Pancreas (tissue), 10 donors: ENCODE measurements at regions of chr3 and their contacts with region 1.

Region 1: DNA sequence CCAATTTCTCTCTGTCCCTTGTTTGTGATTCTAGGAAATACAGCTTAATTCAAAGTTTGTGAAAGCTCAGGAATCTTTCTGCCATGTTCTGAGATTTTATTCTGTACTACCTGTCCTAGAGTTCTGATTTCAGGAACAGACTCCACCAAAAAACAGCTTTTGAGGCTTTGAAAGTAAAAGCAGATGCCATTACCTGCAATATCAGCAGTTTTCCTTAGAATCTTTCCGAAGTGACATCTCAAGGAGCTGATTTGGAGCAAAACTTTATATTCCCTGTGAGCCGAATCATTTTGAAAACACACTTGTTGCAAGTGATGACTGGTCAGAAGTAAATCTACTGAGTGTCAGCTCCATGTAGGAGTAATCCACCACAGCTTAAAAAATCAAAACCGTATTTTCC is 59.3 kb upstream of the CCNL1 start:
- DNase-seq: no peak
- ATAC-seq: no peak
- H3K4me3 ChIP-seq: no peak overlapping the region
- H3K27ac ChIP-seq: no peak overlapping the region
- H3K4me1 ChIP-seq: no peaks in the 10 kb centered on the region
- H3K27me3 ChIP-seq: no peaks in the 10 kb centered on the region
- CTCF ChIP-seq: no peak

Region 2: GRCh38 chr3:157566596-157566995 is 347.4 kb after region 1 on chr3:
- intact Hi-C with region 1: loop called in 1 of 3 experiments (anchors 10 kb)
- DNase-seq: no peak
- ATAC-seq: no peak
- H3K4me3 ChIP-seq: no peak overlapping the region
- H3K27ac ChIP-seq: no peak overlapping the region
- H3K4me1 ChIP-seq: no peaks in the 10 kb centered on the region
- H3K27me3 ChIP-seq: no peaks in the 10 kb centered on the region
- CTCF ChIP-seq: no peak